Esophagus muscularis mucosa (tissue), 4 donors: ENCODE measurements at regions of chr17 and their contacts with region 1.

Region 1: GRCh38 chr17:59837308-59838051 is 55.3 kb downstream of the TUBD1 start:
- DNase-seq: no peak
- H3K4me3 ChIP-seq: peak overlapping the region; percentile 59 to 68 (median 62)
- H3K27ac ChIP-seq: peak overlapping the region; percentile 87 to 95 (median 91)
- H3K4me1 ChIP-seq: peaks cover 33 to 49% (median 47%) of the 10 kb centered on the region in 4 donors
- H3K27me3 ChIP-seq: no peaks in the 10 kb centered on the region
- CTCF ChIP-seq: no peak
- EP300 ChIP-seq: peak; percentile 88
- POLR2A ChIP-seq: peak; percentile 77

Region 2: DNA sequence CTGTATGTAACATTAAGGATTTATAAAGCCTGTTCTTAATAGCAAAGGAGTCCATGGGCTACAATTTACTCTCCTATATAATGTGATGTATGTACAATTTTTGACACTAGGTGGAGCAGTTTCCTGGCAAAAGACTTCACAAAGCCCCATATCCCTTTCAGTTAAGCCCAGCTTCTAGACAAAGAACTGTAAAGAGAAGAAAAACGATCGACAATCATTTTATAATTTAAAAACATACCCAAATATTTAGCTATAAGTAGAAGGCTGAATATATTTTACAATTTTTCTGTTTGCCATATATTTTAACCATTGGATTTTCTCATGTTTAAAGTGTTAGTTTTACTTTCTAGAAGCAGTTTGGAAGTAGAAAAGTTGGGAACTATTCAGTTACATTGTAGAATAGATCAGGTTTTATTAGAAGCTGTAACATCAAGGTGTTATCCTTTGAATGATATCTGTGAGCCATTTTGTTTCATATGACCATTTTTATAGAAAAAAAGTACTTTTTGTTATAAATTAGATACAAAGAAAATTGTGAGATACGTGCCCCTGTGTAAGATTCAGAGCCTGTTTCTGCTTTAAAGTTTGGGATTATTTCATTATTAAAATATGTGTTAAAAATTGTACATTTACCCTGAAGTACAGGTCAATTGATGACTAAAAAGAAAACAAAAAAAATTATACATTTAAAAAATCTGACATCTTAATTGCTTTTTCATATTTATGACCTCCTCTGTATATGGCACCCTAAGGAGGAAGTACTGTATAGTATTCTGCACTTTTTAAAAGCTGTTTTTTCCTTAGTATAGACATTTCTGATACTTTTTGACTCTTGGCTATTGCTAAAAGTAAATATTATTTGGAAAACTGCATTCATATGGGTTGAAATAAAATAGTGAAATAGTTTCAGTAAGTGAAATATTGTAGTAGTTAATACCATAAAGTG is 83.7 kb before region 1 on chr17:
- intact Hi-C with region 1: loop called (anchors 5 kb)
- DNase-seq: no peak
- H3K4me3 ChIP-seq: peak overlapping the region in 2 of 4 donors; percentile 1 to 18
- H3K27ac ChIP-seq: peak overlapping the region; percentile 3 to 53 (median 42)
- H3K4me1 ChIP-seq: peaks cover 4 to 28% (median 20%) of the 10 kb centered on the region in 4 donors
- H3K27me3 ChIP-seq: no peaks in the 10 kb centered on the region
- CTCF ChIP-seq: peak; percentile 69 to 80 (median 70)
- EP300 ChIP-seq: no peak
- POLR2A ChIP-seq: no peak